ENCODE measurements at regions of chr11 and their contacts with region 1.

Region 1: DNA sequence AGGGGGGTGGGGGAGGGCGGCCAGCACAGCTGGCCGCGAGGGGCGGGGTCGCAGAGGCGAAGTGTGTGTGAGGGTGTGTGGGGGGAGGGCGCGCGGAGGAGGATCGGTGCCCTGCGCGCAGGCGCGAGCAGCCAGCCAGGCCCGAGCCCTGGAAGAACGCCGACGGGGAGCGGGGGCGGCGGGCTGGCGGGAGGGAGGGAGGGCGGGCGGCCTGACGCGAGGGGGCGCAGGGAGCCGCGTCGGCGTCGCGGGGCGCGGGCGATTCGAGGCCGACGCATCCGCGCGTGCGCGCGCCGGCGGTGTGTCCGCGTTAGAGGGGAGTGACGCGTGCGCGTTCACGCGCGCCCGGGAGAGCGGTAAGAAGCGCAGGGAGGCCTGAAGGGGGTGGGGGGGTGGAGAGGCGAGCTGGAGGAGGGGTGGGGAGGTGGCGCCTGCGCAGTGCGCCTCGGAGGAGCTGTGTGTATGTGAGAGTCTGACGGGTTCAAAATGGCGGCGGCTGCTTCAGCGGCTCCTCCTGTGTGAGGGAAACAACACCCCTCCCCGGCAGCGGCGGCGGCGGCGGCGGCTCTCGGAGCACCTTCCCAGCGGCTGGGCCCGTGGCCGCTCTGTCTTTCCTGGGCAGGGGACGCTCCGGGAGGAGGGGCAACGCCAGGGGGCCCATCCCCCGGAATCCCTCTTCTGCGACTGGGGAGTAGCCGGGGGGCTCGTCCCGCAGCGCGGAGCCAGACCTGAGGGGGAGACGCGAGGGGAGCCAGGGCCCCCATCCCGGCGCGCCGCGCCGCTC is at the start of gene KDM2A:
- DNase-seq: peak; percentile 98
- ATAC-seq: peak; percentile 84
- H3K4me3 Mint-ChIP-seq: peak within 1 kb of the TSS; percentile 99
- H3K27ac Mint-ChIP-seq: peak within 1 kb of the TSS; percentile 95
- H3K4me1 Mint-ChIP-seq: peaks cover 33% of the 10 kb centered on the region
- H3K27me3 Mint-ChIP-seq: peaks cover 1% of the 10 kb centered on the region
- total RNA-seq, gene KDM2A: 128 to 134 TPM

Region 2: DNA sequence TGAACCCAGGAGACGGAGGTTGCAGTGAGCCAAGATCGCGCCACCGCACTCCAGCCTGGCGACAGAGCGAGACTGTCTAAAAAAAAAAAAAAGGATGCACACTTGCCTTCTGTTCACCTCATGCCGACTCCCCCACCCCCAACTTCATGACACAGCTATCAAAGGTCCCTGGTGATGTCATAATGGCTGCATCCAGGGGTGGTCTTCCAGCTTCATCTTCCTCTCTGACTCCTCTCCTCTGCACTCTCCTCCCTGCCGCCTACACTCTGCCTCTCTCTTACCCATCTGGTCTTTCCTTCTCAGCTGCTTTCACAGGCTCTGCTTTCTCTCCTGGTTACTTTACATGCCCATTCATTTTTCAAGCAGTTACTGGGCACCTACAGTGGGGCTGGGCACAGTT is 16.3 kb before region 1 on chr11:
- POLR2A ChIA-PET with region 1: interaction called, 43 read pairs
- DNase-seq: no peak
- ATAC-seq: no peak
- H3K4me3 Mint-ChIP-seq: no peak overlapping the region
- H3K27ac Mint-ChIP-seq: peak overlapping the region; percentile 71
- H3K4me1 Mint-ChIP-seq: peaks cover 31% of the 10 kb centered on the region
- H3K27me3 Mint-ChIP-seq: no peaks in the 10 kb centered on the region

Region 3: DNA sequence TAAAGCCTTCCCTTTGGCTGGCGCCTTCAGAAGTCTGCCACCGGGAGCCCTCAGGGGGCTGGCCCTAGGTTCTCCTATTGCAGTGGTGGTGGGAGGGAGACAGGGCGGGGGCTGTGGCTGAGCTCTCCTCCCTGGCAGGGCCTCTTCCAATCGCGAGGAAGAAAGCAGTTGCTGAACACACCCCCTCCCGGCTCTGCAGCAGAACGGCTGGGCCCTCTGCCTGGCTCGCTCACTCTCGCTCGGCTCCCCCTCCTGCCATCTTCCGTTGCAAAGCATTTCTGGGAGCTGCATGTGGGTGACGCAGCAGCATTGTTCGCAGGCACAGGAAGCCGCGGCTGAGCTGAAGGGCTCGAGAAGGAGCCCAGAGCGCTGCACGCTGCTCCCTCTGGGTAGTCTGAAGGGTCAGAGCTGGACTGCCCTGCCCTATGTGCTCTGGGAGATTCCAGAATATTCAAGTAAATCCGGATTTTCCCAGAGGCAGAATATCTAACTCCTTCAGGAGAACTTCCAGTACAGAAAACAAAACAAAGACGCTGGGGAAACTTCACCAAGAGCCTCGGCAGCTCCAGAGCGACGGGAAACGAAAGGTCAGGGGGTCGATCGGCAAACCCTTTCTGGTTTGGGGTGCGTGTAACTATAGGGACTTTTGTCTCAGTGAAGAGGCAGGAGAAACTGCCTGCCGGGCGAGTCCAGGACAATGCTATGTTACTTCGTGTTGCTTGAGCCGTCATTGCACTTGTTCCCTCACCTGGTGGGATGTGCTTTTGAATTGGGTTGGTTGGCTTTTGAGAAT is 121.0 kb after region 1 on chr11:
- POLR2A ChIA-PET with region 1: interaction called, 12 read pairs
- DNase-seq: peak; percentile 87
- ATAC-seq: peak; percentile 96
- H3K4me3 Mint-ChIP-seq: peak overlapping the region; percentile 92
- H3K27ac Mint-ChIP-seq: peak overlapping the region; percentile 94
- H3K4me1 Mint-ChIP-seq: peaks cover 38% of the 10 kb centered on the region
- H3K27me3 Mint-ChIP-seq: no peaks in the 10 kb centered on the region